ENCODE measurements at regions of chr7 and their contacts with region 1.

Region 1: GRCh38 chr7:76179686-76180085 is 22.0 kb upstream of the SRRM3 start:
- DNase-seq: no peak
- H3K4me3 Mint-ChIP-seq: no peak overlapping the region
- H3K27ac Mint-ChIP-seq: no peak overlapping the region
- H3K4me1 Mint-ChIP-seq: peaks cover 3% of the 10 kb centered on the region
- H3K27me3 Mint-ChIP-seq: no peaks in the 10 kb centered on the region

Region 2: GRCh38 chr7:75559355-75559975 is 620.2 kb before region 1 on chr7:
- CTCF ChIA-PET with region 1: no interaction called
- intact Hi-C with region 1: no loop called
- DNase-seq: no peak
- H3K4me3 Mint-ChIP-seq: no peak overlapping the region
- H3K27ac Mint-ChIP-seq: no peak overlapping the region
- H3K4me1 Mint-ChIP-seq: no peaks in the 10 kb centered on the region
- H3K27me3 Mint-ChIP-seq: no peaks in the 10 kb centered on the region

Region 3: GRCh38 chr7:76166404-76167255 is 13.1 kb before region 1 on chr7:
- CTCF ChIA-PET with region 1: interaction called, 35 read pairs
- intact Hi-C with region 1: no loop called
- DNase-seq: peak; percentile 94
- H3K4me3 Mint-ChIP-seq: peak overlapping the region; percentile 84
- H3K27ac Mint-ChIP-seq: peak overlapping the region; percentile 85
- H3K4me1 Mint-ChIP-seq: peaks cover 8% of the 10 kb centered on the region
- H3K27me3 Mint-ChIP-seq: no peaks in the 10 kb centered on the region

Region 4: DNA sequence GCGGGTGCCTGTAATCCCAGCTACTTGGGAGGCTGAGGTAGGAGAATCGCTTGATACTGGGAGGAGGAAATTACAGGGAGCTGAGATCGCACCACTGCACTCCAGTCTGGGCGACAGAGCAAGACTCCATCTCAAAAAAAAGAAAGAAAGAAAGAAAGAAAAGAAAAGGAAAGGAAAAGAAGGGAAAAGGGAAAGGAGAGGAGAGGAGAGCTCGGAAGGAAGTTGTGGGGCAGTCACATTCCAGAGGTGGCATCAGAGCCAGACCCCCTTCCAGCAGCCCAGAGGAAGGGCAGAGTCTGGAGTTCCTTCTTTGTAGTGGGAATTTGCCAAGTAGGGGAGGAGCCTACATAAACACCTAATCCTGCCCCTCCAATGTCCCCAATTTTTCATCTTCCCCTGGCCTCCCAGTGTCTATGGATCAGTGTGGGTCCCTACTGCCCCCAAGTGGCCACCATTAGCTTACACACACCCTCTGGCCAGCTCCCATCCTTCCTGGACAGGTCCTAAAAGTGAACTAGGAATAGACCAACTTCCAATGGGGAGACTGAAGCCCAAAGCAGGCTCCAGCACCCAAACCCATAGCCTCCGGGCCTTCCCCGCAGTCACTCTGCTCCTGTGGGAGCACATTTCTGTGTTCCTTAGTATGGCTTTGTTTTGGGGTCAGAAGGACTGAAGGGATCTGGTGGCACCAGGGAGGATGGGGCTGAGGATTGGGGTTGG is 83.2 kb after region 1 on chr7:
- CTCF ChIA-PET with region 1: interaction called, 42 read pairs
- intact Hi-C with region 1: loop called (anchors 1 kb)
- DNase-seq: peak; percentile 60
- H3K4me3 Mint-ChIP-seq: no peak overlapping the region
- H3K27ac Mint-ChIP-seq: no peak overlapping the region
- H3K4me1 Mint-ChIP-seq: peaks cover 4% of the 10 kb centered on the region
- H3K27me3 Mint-ChIP-seq: peaks cover 21% of the 10 kb centered on the region

Region 5: DNA sequence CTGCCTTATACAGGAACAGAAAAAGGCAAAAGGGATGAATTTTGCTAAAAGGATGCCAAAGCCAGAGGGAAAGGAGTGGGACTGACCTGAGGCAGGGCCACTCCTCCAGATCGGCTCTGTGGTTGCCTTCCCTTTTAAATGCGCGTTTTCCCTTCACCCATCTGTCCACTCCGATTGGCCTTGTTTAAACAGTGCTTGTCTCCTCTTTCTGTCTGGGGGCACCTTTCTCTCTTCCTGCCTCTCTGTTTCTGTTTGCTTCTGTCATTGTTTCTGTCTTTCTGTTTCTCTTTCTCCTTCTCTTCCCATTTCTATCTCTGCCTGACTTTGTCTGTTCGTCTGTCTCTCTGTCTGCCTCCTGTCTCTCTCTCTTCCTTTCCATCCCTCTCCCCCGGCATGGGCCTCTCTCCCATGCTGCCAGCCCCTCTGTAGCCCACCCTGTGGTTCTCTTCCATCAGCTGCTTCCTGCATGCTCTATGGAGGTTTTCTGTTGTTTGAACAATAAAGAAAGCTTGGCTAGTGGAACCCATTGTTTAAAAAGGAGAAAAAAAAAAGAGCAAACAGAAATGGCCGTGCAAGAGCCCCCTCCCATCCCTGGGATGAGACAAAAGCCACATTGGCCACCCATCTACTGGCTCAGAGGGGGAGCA is 93.3 kb after region 1 on chr7:
- CTCF ChIA-PET with region 1: interaction called, 11 read pairs
- intact Hi-C with region 1: no loop called
- DNase-seq: no peak
- H3K4me3 Mint-ChIP-seq: no peak overlapping the region
- H3K27ac Mint-ChIP-seq: no peak overlapping the region
- H3K4me1 Mint-ChIP-seq: peaks cover 16% of the 10 kb centered on the region
- H3K27me3 Mint-ChIP-seq: peaks cover 19% of the 10 kb centered on the region

Region 6: GRCh38 chr7:76291343-76292212 is 111.9 kb after region 1 on chr7:
- CTCF ChIA-PET with region 1: interaction called, 9 read pairs
- intact Hi-C with region 1: loop called (anchors 1 kb)
- DNase-seq: peak; percentile 97
- H3K4me3 Mint-ChIP-seq: peak overlapping the region; percentile 38
- H3K27ac Mint-ChIP-seq: peak overlapping the region; percentile 68
- H3K4me1 Mint-ChIP-seq: peaks cover 9% of the 10 kb centered on the region
- H3K27me3 Mint-ChIP-seq: no peaks in the 10 kb centered on the region

Region 7: GRCh38 chr7:76327610-76328009 is 147.9 kb after region 1 on chr7:
- CTCF ChIA-PET with region 1: interaction called, 10 read pairs
- intact Hi-C with region 1: no loop called
- DNase-seq: no peak
- H3K4me3 Mint-ChIP-seq: no peak overlapping the region
- H3K27ac Mint-ChIP-seq: peak overlapping the region; percentile 65
- H3K4me1 Mint-ChIP-seq: peaks cover 28% of the 10 kb centered on the region
- H3K27me3 Mint-ChIP-seq: no peaks in the 10 kb centered on the region

Region 8: GRCh38 chr7:76393116-76394031 is 213.7 kb after region 1 on chr7:
- CTCF ChIA-PET with region 1: no interaction called
- intact Hi-C with region 1: loop called (anchors 10 kb)
- DNase-seq: peak; percentile 89
- H3K4me3 Mint-ChIP-seq: peak overlapping the region; percentile 85
- H3K27ac Mint-ChIP-seq: peak overlapping the region; percentile 92
- H3K4me1 Mint-ChIP-seq: peaks cover 23% of the 10 kb centered on the region
- H3K27me3 Mint-ChIP-seq: no peaks in the 10 kb centered on the region